CD8-positive, alpha-beta T cell (primary cell): ENCODE measurements at regions of chr3 and their contacts with region 1.

Region 1: GRCh38 chr3:66553441-66554113 is 52.8 kb upstream of the LRIG1 start:
- DNase-seq: no peak
- ATAC-seq: no peak
- H3K4me3 ChIP-seq: no peak overlapping the region
- H3K4me3 Mint-ChIP-seq: no peak overlapping the region
- H3K27ac ChIP-seq: no peak overlapping the region
- H3K27ac Mint-ChIP-seq: no peak overlapping the region
- H3K4me1 ChIP-seq: no peaks in the 10 kb centered on the region
- H3K4me1 Mint-ChIP-seq: no peaks in the 10 kb centered on the region
- H3K27me3 ChIP-seq: no peaks in the 10 kb centered on the region
- H3K27me3 Mint-ChIP-seq: peaks cover 3% of the 10 kb centered on the region
- CTCF ChIP-seq: no peak

Region 2: DNA sequence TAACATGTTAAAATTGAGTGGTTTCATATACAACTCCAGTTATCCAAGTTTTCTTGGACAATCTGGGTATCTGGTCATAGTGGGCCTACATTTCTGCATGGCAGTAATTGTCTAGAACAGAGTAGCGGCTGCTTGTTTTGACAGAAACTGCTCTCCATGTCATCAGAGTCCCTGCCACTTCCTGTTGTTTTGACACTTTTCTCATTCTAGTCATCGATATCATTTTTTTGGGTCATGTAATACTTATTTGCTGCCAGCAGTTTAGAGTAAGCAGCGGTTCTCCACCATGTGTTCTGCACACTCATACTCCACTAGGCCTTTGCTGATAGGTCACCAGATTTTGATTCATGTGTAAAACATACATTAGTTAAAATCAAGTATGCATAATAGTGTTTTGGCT is 251.3 kb before region 1 on chr3:
- CTCF ChIA-PET with region 1: no interaction called
- POLR2A ChIA-PET with region 1: no interaction called
- intact Hi-C with region 1: no loop called
- DNase-seq: peak in 7 of 9 experiments; percentile 37 to 90 (median 55)
- ATAC-seq: peak; percentile 68
- H3K4me3 ChIP-seq: no peak overlapping the region
- H3K4me3 Mint-ChIP-seq: peak overlapping the region; percentile 10
- H3K27ac ChIP-seq: peak overlapping the region; percentile 69 to 97
- H3K27ac Mint-ChIP-seq: peak overlapping the region; percentile 95
- H3K4me1 ChIP-seq: peaks cover 55% of the 10 kb centered on the region
- H3K4me1 Mint-ChIP-seq: peaks cover 81% of the 10 kb centered on the region
- H3K27me3 ChIP-seq: no peaks in the 10 kb centered on the region
- H3K27me3 Mint-ChIP-seq: no peaks in the 10 kb centered on the region
- CTCF ChIP-seq: no peak

Region 3: DNA sequence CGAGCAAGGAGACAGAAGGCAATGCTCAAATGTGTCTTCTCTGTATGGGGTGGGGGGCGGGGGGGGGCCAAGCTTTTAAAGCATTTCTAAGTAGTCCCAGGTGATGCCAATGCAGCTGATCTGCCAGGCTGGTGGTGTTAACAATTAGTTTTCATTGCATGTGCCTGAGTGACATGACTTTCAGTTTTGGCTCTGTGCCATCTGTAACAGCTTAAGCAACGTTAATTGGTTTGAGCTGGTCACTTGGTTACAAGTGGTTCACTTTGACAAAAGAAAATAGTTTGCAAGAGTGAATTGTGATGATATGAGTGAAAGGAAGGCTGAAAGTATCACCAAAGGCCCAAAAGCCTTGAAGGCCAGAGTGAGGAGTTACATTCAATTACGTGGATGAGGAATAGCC is 26.3 kb before region 1 on chr3:
- CTCF ChIA-PET with region 1: no interaction called
- POLR2A ChIA-PET with region 1: no interaction called
- intact Hi-C with region 1: loop called in 1 of 2 experiments (anchors 1 kb)
- DNase-seq: no peak
- ATAC-seq: no peak
- H3K4me3 ChIP-seq: no peak overlapping the region
- H3K4me3 Mint-ChIP-seq: no peak overlapping the region
- H3K27ac ChIP-seq: no peak overlapping the region
- H3K27ac Mint-ChIP-seq: no peak overlapping the region
- H3K4me1 ChIP-seq: peaks cover 4% of the 10 kb centered on the region
- H3K4me1 Mint-ChIP-seq: peaks cover 5% of the 10 kb centered on the region
- H3K27me3 ChIP-seq: peaks cover 0 to 8% of the 10 kb centered on the region in 2 experiments
- H3K27me3 Mint-ChIP-seq: peaks cover 14% of the 10 kb centered on the region
- CTCF ChIP-seq: no peak

Region 4: GRCh38 chr3:66567077-66567476 is 13.5 kb after region 1 on chr3:
- CTCF ChIA-PET with region 1: no interaction called
- POLR2A ChIA-PET with region 1: no interaction called
- intact Hi-C with region 1: no loop called
- DNase-seq: no peak
- ATAC-seq: no peak
- H3K4me3 ChIP-seq: no peak overlapping the region
- H3K4me3 Mint-ChIP-seq: no peak overlapping the region
- H3K27ac ChIP-seq: no peak overlapping the region
- H3K27ac Mint-ChIP-seq: no peak overlapping the region
- H3K4me1 ChIP-seq: no peaks in the 10 kb centered on the region
- H3K4me1 Mint-ChIP-seq: no peaks in the 10 kb centered on the region
- H3K27me3 ChIP-seq: no peaks in the 10 kb centered on the region
- H3K27me3 Mint-ChIP-seq: no peaks in the 10 kb centered on the region
- CTCF ChIP-seq: no peak